Mammary epithelial cell (primary cell): ENCODE measurements at regions of chr3 and their contacts with region 1.

Region 1: GRCh38 chr3:78645628-78646310 is 1122.0 kb downstream of the ROBO1 start:
- DNase-seq: peak; percentile 61
- H3K4me3 ChIP-seq: no peak overlapping the region
- H3K27ac ChIP-seq: no peak overlapping the region
- H3K4me1 ChIP-seq: peaks cover 14% of the 10 kb centered on the region
- H3K27me3 ChIP-seq: no peaks in the 10 kb centered on the region
- CTCF ChIP-seq: peak; percentile 82 to 91

Region 2: GRCh38 chr3:77254967-77255831 is 1390.6 kb before region 1 on chr3:
- CTCF ChIA-PET with region 1: no interaction called
- dilution Hi-C with region 1: no loop called
- in situ Hi-C with region 1: no loop called
- intact Hi-C with region 1: loop called (anchors 5 kb)
- DNase-seq: peak; percentile 27
- H3K4me3 ChIP-seq: no peak overlapping the region
- H3K27ac ChIP-seq: no peak overlapping the region
- H3K4me1 ChIP-seq: no peaks in the 10 kb centered on the region
- H3K27me3 ChIP-seq: no peaks in the 10 kb centered on the region
- CTCF ChIP-seq: peak; percentile 52 to 69

Region 3: DNA sequence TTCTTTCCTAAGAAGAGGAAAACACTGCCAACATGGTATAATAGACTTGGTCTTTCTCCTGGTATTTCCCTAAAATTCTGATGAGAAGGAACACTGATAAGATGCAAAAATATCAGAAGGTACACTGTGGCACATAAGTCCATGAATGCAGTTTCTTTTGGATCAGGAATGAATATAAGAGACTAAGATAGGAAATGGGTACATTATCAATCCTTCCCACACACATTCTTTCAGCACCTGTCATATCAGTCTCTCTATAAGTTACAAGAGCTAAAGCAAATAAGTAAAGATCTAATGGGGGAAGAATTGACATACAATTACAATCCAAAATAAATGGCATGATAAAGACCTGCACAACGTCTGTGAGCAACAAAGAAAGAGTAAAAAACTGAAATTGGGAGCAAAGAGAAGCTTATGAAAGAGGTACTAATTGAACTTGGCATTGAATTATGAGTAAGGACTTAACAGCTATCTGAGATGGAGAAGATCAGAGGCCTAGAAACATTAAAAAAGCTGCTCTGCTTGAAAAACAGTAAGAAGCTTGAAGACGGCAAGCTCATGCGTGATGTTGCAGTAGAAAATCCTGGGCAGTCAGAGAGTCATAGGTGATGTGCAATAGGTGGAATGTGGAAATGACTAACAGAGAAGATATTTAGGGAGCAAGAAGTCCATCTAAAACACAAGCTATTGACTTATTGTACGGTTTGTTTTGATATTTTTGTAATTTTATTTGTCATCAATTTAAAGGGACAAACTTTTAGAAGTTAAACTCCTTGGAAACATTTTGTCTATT is 504.7 kb before region 1 on chr3:
- CTCF ChIA-PET with region 1: no interaction called
- dilution Hi-C with region 1: no loop called
- in situ Hi-C with region 1: no loop called
- intact Hi-C with region 1: loop called (anchors 2 kb)
- DNase-seq: peak; percentile 77
- H3K4me3 ChIP-seq: no peak overlapping the region
- H3K27ac ChIP-seq: peak overlapping the region; percentile 75
- H3K4me1 ChIP-seq: peaks cover 30% of the 10 kb centered on the region
- H3K27me3 ChIP-seq: no peaks in the 10 kb centered on the region
- CTCF ChIP-seq: no peak

Region 4: DNA sequence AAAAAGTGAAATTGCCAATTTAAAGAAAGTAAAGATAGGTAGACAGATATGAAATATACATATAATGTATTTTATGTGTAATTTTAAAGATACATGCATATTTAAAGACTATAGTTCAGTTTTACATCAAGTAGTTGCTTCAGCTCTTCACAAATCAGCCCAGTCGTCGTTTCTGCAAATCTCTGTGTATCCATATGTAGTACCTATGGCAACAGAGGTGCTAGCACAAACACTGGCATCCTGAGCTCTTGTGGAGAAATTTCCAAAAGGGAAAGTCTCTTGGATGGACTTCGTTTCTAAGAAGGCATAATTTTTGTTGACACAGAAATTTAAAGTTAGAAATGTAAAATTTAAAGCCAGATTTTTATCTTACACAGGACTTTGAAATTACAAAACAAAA is 162.7 kb before region 1 on chr3:
- CTCF ChIA-PET with region 1: interaction called, 5 read pairs
- dilution Hi-C with region 1: no loop called
- in situ Hi-C with region 1: no loop called
- intact Hi-C with region 1: loop called (anchors 5 kb)
- DNase-seq: no peak
- H3K4me3 ChIP-seq: no peak overlapping the region
- H3K27ac ChIP-seq: no peak overlapping the region
- H3K4me1 ChIP-seq: no peaks in the 10 kb centered on the region
- H3K27me3 ChIP-seq: peaks cover 3% of the 10 kb centered on the region
- CTCF ChIP-seq: no peak